Left ventricle myocardium superior (tissue), 1 donor: ENCODE measurements at regions of chr4 and their contacts with region 1.

Region 1: DNA sequence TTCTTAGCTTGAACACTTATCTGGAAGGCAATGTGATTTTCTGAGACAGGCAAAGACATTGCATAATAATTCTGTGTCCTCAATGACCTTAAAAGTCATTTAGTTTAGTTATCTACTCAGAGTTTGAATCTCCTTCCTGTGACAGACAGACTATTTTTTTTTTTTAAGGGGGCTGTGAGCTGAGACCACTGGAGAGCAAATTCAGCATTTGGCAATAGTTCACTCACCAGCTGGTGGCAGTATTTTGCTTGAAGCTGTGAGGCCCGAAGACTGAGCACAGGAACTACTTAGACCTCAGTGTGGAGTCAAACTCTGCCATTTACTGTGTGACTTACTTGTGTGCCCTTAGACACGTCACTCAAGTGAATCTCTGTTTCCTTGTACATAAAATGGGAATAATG is 22.9 kb upstream of the CPE start:
- DNase-seq: peak; percentile 31
- ATAC-seq: peak; percentile 61

Region 2: DNA sequence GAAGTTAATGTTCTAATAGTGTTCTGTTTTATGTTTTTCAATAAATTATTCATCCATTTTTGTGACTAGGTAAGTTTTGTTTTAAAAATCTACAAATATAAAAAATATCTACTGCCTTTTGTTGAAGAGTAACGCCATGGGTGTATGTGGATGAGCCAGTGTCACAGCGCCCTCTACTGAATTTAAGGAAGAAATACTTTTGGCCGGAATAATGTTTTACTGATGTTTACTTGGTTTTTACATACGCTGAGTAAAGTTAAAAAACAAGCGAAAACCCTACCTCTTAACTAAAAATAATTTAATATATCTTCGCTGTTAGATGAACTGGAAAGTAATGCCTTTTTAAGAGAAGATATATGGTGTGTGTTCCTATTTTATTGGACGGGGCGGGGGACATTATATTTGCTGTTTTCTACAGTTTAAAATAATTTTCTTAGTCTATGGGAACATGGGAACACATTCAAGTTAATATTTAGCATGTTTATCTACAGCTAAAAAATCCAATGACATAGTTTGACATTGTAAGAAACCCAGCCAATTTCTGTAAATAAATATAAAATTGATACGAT is 109.0 kb after region 1 on chr4:
- intact Hi-C with region 1: loop called (anchors 10 kb)
- DNase-seq: no peak
- ATAC-seq: peak; percentile 55

Region 3: GRCh38 chr4:165505991-165506837 is 150.3 kb after region 1 on chr4:
- intact Hi-C with region 1: no loop called
- DNase-seq: no peak
- ATAC-seq: no peak